ENCODE measurements at regions of chr17 and their contacts with region 1.

Region 1: GRCh38 chr17:64262417-64263260 is at the start of gene TEX2:
- DNase-seq: peak; percentile 78
- H3K4me3 ChIP-seq: peak within 1 kb of the TSS; percentile 98 to 99 (median 98)
- H3K27ac ChIP-seq: peak within 1 kb of the TSS; percentile 94 to 97 (median 94)
- H3K4me1 ChIP-seq: peaks cover 0 to 38% (median 29%) of the 10 kb centered on the region in 4 donors
- H3K27me3 ChIP-seq: no peaks in the 10 kb centered on the region
- CTCF ChIP-seq: no peak
- EP300 ChIP-seq: no peak
- POLR2A ChIP-seq: no peak
- total RNA-seq, gene TEX2: 39.3 to 50.7 (median 42.5) TPM

Region 2: GRCh38 chr17:64223931-64224629 is 38.6 kb before region 1 on chr17:
- intact Hi-C with region 1: loop called (anchors 5 kb)
- DNase-seq: no peak
- H3K4me3 ChIP-seq: no peak overlapping the region
- H3K27ac ChIP-seq: no peak overlapping the region
- H3K4me1 ChIP-seq: peaks cover 0 to 3% (median 0%) of the 10 kb centered on the region in 4 donors
- H3K27me3 ChIP-seq: no peaks in the 10 kb centered on the region
- CTCF ChIP-seq: no peak
- EP300 ChIP-seq: no peak
- POLR2A ChIP-seq: no peak

Measured in sigmoid colon (tissue), 7 donors.